MCF 10A (cell line): ENCODE measurements at regions of chr2 and their contacts with region 1.

Region 1: GRCh38 chr2:63189026-63189425 is 138.4 kb downstream of the OTX1 start:
- DNase-seq: peak; percentile 77
- H3K4me3 Mint-ChIP-seq: peak overlapping the region; percentile 31
- H3K27ac Mint-ChIP-seq: no peak overlapping the region
- H3K4me1 Mint-ChIP-seq: peaks cover 6% of the 10 kb centered on the region
- H3K27me3 Mint-ChIP-seq: no peaks in the 10 kb centered on the region
- CTCF ChIP-seq: peak; percentile 90

Region 2: DNA sequence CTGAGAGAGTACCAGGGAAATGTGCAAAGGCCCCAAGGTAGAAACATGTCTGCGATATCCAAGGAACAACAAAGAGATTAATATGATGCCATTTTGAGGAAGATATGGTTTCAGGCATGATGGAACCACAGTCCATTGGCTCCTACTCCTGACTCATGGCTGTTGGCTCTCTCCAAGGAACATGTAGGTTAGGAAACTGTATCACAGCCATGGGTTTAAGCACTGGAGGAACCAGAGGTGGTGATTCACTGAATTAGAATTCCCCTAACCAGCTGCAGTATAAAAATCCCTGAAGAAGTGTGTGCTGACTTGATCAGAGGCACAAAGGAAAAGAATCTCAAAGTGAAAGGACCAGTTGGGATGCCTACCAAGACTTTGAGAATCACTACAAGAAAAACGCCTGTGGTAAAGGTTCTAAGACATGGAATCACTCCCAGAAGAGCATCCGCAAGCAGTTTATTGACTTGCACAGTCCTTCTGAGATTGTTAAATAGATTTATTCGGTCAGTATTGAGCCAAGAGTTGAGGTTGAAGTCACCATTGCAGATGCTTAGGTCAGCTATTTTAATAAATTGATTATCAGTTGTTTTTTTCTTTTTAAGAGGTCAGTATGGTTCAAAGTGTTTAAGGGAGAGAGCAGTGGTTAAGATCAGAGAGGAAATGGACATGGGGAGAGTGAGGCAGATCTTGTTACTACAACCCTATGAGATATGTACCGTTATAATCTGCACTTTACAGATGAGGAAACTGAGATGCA is 249.1 kb before region 1 on chr2:
- CTCF ChIA-PET with region 1: no interaction called
- POLR2A ChIA-PET with region 1: no interaction called
- intact Hi-C with region 1: loop called (anchors 10 kb)
- DNase-seq: peak; percentile 65
- H3K4me3 Mint-ChIP-seq: no peak overlapping the region
- H3K27ac Mint-ChIP-seq: no peak overlapping the region
- H3K4me1 Mint-ChIP-seq: peaks cover 12% of the 10 kb centered on the region
- H3K27me3 Mint-ChIP-seq: no peaks in the 10 kb centered on the region
- CTCF ChIP-seq: no peak

Region 3: DNA sequence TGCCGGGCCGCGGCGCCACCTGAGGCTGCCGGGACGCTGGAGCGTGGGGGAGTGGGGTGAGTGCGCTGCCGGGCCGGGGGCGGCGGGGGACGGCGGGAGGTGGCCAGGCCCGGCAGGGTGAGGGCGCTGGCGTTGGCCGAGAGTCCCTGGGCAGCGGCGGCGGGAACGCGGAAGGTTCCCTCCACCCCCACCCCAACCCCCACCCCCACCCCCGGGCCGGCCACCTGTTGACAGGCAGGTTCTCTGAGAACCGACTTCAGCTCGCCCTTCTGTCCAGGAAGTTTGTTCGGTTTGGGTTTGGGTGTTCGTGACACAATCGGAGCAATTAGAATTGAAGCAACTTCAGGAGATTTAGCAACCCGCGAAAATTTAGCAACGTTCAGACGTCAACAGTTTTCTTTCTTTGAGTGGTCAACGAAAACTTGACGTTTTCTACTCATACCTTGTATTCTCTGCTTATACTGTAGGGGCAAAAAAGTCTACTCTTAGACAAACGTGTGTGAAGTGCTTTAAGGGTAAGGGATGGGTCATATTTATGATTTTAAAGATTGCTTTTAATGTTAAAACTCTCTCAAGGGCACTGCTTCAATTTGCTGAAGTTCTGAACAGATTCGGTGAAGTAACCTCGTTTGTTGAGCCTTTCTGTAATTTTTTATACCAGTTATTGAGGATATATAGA is 129.1 kb before region 1 on chr2:
- CTCF ChIA-PET with region 1: interaction called, 4 read pairs
- POLR2A ChIA-PET with region 1: no interaction called
- intact Hi-C with region 1: loop called (anchors 10 kb)
- DNase-seq: peak; percentile 47
- H3K4me3 Mint-ChIP-seq: peak overlapping the region; percentile 64
- H3K27ac Mint-ChIP-seq: no peak overlapping the region
- H3K4me1 Mint-ChIP-seq: no peaks in the 10 kb centered on the region
- H3K27me3 Mint-ChIP-seq: no peaks in the 10 kb centered on the region
- CTCF ChIP-seq: no peak

Region 4: DNA sequence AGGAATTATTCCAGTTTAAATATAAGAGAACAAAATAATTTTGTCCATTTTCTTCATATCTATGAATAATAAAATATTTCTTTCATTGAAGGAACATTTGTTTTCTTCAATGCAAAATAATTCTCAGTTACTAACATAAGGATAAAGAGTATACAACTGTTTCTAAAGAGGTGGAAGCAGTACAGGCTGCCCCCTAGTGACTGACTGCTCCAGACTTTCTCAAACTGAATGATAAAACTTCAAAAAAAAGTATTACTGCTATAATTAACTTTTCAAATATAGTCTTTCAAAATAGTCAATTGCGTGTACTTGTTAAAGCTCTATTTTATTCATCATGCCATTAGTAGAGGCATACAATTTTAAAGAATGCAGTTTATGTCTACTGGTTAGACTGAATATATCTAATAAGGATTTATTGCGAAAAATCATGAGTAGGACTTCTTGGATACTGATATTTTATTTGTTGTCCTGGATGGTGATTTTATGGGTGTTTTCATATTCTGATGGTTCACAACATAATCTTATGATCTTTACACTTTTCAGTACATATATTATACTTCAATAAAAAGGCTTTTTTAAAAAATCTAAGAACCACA is 299.2 kb after region 1 on chr2:
- CTCF ChIA-PET with region 1: interaction called, 3 read pairs
- POLR2A ChIA-PET with region 1: interaction called, 3 read pairs
- intact Hi-C with region 1: loop called (anchors 5 kb)
- DNase-seq: peak; percentile 46
- H3K4me3 Mint-ChIP-seq: no peak overlapping the region
- H3K27ac Mint-ChIP-seq: no peak overlapping the region
- H3K4me1 Mint-ChIP-seq: no peaks in the 10 kb centered on the region
- H3K27me3 Mint-ChIP-seq: no peaks in the 10 kb centered on the region
- CTCF ChIP-seq: peak; percentile 54